Calu3 (cell line): ENCODE measurements at regions of chr16 and their contacts with region 1.

Region 1: GRCh38 chr16:78709137-78709884 is 609.9 kb downstream of the WWOX start:
- DNase-seq: no peak
- H3K4me3 Mint-ChIP-seq: no peak overlapping the region
- H3K27ac Mint-ChIP-seq: no peak overlapping the region
- H3K4me1 Mint-ChIP-seq: no peaks in the 10 kb centered on the region
- H3K27me3 Mint-ChIP-seq: no peaks in the 10 kb centered on the region
- CTCF ChIP-seq: no peak

Region 2: DNA sequence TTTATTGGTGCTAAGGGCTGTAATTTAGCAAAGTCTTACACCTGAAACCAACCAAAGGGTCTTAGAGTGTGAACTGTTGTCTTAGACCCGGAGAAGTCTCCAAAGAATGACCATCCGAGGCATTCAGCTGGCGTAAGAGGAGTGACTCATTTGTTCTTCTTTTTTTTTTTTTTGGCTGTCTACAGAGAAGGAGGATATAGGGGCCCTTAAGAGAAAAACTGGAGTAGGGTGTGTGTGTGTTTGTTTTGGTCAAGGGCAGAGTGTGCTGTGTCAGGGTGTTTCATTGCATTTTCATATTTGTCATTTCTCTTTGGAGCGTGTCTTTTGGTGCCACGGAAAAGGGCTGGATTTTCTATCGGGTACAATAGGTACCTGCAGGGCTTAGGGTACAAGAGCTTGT is 101.8 kb before region 1 on chr16:
- CTCF ChIA-PET with region 1: no interaction called
- intact Hi-C with region 1: loop called (anchors 1 kb)
- DNase-seq: no peak
- H3K4me3 Mint-ChIP-seq: no peak overlapping the region
- H3K27ac Mint-ChIP-seq: no peak overlapping the region
- H3K4me1 Mint-ChIP-seq: no peaks in the 10 kb centered on the region
- H3K27me3 Mint-ChIP-seq: no peaks in the 10 kb centered on the region
- CTCF ChIP-seq: no peak